H1 (cell line): ENCODE measurements at regions of chr19 and their contacts with region 1.

Region 1: DNA sequence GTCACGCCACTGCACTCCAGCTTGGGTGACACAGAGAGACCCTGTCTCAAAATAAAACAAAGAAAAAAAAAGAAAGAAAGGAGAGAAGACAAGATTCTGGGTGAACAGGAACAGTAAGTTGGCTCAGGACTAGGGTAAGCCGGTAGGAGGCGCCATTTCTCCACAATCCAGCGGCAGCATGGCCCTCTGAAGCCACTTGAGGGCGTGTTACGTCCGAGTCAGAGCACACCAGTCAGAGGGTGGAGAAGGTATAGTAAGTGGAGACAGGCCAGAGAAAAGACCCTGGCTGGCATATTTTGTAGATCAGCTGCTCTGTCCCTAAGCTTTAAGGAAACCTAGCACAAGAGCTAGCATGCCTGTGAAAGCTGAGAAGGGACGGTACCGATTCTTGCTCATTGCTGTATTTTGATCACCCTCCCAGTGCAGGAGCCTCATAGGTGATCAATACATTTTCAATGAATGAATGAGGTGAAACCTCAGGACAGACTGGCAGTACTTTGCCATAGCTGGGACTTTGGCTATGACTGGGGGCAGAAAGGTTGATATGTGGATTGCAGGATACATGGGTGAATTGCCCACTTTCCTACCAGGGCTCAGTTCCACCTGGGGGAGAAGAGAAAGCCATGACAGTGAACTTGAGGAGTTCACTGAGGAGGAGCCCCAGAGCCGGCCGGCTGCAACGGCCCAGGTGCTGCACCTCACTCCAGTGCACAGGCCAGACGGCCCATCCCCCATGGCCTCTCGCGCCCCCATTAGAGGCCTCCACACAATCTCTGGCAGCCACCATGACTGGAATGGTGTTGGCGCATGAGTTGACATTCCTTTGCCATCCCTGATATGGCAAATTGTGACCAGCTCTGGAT is 23.5 kb downstream of the POU2F2 start:
- DNase-seq: peak; percentile 82 to 95
- H3K4me3 ChIP-seq: no peak overlapping the region
- H3K27ac ChIP-seq: no peak overlapping the region
- H3K4me1 ChIP-seq: peaks cover 0 to 12% (median 4%) of the 10 kb centered on the region in 4 experiments; a peak in 6 of 7 replicates
- H3K27me3 ChIP-seq: no peaks in the 10 kb centered on the region
- CTCF ChIP-seq: peak; percentile 100
- EP300 ChIP-seq: peak in 1 of 2 experiments; percentile 26; a peak in 1 of 3 replicates
- POLR2A ChIP-seq: no peak
- RAD21 ChIP-seq: peak; percentile 100

Region 2: GRCh38 chr19:42051166-42052118 is 57.3 kb before region 1 on chr19:
- CTCF ChIA-PET with region 1: no interaction called
- POLR2A ChIA-PET with region 1: no interaction called
- DNase-seq: no peak
- H3K4me3 ChIP-seq: no peak overlapping the region
- H3K27ac ChIP-seq: no peak overlapping the region
- H3K4me1 ChIP-seq: no peaks in the 10 kb centered on the region
- H3K27me3 ChIP-seq: no peaks in the 10 kb centered on the region
- CTCF ChIP-seq: no peak
- EP300 ChIP-seq: no peak
- POLR2A ChIP-seq: no peak
- RAD21 ChIP-seq: no peak

Region 3: DNA sequence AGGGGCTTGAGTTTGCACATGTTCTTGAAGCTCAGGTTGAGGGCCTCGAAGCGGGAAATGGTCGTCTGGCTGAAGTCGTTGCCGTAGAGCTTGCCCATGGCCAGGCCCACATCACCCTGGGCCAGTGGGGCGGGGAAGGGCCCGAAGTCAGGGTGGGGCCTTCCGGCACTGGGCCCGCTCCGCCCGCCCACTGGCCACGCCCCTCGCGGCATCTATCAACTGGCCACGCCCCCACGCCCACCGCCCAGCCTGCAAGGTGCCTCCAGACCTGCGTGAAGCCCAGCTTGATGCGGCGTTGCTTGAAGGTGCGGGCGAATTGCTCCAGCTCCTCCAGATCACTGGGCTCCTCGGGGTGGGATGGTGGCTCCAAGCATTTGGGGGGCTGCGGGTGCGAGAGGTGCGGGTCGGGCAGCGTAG is 12.9 kb before region 1 on chr19:
- CTCF ChIA-PET with region 1: interaction called, 42 read pairs
- POLR2A ChIA-PET with region 1: interaction called, 5 read pairs
- DNase-seq: peak; percentile 43 to 99
- H3K4me3 ChIP-seq: peak overlapping the region; percentile 11 to 54 (median 34); a peak in 6 of 8 replicates
- H3K27ac ChIP-seq: no peak overlapping the region
- H3K4me1 ChIP-seq: peaks cover 0 to 17% (median 5%) of the 10 kb centered on the region in 4 experiments; a peak in 6 of 7 replicates
- H3K27me3 ChIP-seq: peaks cover 0 to 5% (median 2%) of the 10 kb centered on the region in 4 experiments; a peak in 2 of 7 replicates
- CTCF ChIP-seq: no peak
- EP300 ChIP-seq: no peak
- POLR2A ChIP-seq: no peak
- RAD21 ChIP-seq: no peak

Region 4: GRCh38 chr19:42132851-42133528 is 24.2 kb after region 1 on chr19:
- CTCF ChIA-PET with region 1: interaction called, 146 read pairs
- POLR2A ChIA-PET with region 1: interaction called, 6 read pairs
- DNase-seq: peak; percentile 70 to 98
- H3K4me3 ChIP-seq: peak overlapping the region; percentile 24 to 60 (median 52); a peak in 7 of 8 replicates
- H3K27ac ChIP-seq: no peak overlapping the region
- H3K4me1 ChIP-seq: peaks cover 3 to 12% (median 9%) of the 10 kb centered on the region in 4 experiments; a peak in 6 of 7 replicates
- H3K27me3 ChIP-seq: peaks cover 0 to 17% (median 8%) of the 10 kb centered on the region in 4 experiments; a peak in 5 of 7 replicates
- CTCF ChIP-seq: peak; percentile 81 to 97 (median 88)
- EP300 ChIP-seq: peak in 1 of 2 experiments; percentile 35; a peak in 1 of 3 replicates
- POLR2A ChIP-seq: peak in 1 of 2 experiments; percentile 53; a peak in 1 of 3 replicates
- RAD21 ChIP-seq: peak; percentile 98

Region 5: DNA sequence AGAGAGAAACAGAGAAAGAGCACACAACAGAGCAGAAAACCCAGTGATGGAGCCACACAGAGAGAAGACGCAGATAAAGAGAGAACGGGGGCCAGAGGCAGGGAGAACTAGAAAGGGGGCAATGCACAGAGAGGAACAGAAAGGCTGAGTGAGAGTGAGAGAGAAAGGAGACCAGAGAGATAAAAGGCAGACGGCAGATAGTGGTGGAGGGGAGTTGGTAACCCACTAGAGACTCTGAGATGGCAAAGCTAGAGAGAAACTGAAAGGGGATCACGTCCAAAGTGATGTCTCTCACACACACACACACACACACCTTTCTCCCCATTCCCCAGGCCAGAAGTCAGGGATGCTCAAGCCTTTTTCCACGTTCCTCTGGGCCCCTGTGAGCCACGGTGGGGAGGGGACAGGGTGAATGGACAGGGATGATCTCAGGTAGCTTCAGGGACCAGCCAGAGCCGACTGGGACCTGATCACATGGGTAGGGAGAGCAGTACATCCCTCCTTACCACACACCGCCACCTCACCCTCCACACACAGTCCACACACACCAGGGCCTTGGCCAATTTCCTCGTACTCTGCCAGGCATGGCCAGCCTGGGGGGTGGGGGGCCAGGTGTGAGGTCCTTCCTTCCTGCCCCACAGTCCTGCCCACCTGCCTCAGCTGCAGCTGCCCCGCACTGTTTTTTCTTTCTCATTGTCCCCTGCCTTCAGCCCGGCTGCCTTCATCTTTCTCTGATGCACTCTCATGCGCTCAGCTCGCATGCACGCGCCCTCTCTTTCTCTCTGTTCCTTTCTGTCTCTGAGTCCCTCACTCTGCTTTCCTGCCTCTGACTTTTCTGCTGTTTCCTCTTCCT is 45.9 kb after region 1 on chr19:
- CTCF ChIA-PET with region 1: interaction called, 11 read pairs
- POLR2A ChIA-PET with region 1: interaction called, 3 read pairs
- DNase-seq: no peak
- H3K4me3 ChIP-seq: no peak overlapping the region; a peak in 1 of 8 replicates
- H3K27ac ChIP-seq: no peak overlapping the region
- H3K4me1 ChIP-seq: peaks cover 0 to 37% (median 21%) of the 10 kb centered on the region in 4 experiments; a peak in 6 of 7 replicates
- H3K27me3 ChIP-seq: peaks cover 0 to 11% (median 7%) of the 10 kb centered on the region in 4 experiments; a peak in 4 of 7 replicates
- CTCF ChIP-seq: no peak
- EP300 ChIP-seq: no peak
- POLR2A ChIP-seq: no peak
- RAD21 ChIP-seq: no peak

Region 6: GRCh38 chr19:42184401-42184861 is 75.7 kb after region 1 on chr19:
- CTCF ChIA-PET with region 1: interaction called, 28 read pairs
- POLR2A ChIA-PET with region 1: no interaction called
- DNase-seq: peak; percentile 79 to 97
- H3K4me3 ChIP-seq: no peak overlapping the region
- H3K27ac ChIP-seq: no peak overlapping the region
- H3K4me1 ChIP-seq: peaks cover 0 to 7% (median 3%) of the 10 kb centered on the region in 4 experiments; a peak in 3 of 7 replicates
- H3K27me3 ChIP-seq: peaks cover 5 to 23% (median 15%) of the 10 kb centered on the region in 4 experiments
- CTCF ChIP-seq: peak; percentile 95 to 98 (median 96)
- EP300 ChIP-seq: no peak
- POLR2A ChIP-seq: no peak
- RAD21 ChIP-seq: peak; percentile 94 to 96